Psoas muscle (tissue), 8 donors: ENCODE measurements at regions of chr9 and their contacts with region 1.

Region 1: GRCh38 chr9:131349881-131350563 is 43.9 kb upstream of the PRRC2B start:
- DNase-seq: peak; percentile 89 to 94
- ATAC-seq: peak; percentile 85 to 95 (median 86)
- H3K4me3 ChIP-seq: peak overlapping the region; percentile 53
- H3K27ac ChIP-seq: no peak overlapping the region
- H3K4me1 ChIP-seq: peaks cover 17% of the 10 kb centered on the region
- H3K27me3 ChIP-seq: no peaks in the 10 kb centered on the region
- CTCF ChIP-seq: peak; percentile 85

Region 2: DNA sequence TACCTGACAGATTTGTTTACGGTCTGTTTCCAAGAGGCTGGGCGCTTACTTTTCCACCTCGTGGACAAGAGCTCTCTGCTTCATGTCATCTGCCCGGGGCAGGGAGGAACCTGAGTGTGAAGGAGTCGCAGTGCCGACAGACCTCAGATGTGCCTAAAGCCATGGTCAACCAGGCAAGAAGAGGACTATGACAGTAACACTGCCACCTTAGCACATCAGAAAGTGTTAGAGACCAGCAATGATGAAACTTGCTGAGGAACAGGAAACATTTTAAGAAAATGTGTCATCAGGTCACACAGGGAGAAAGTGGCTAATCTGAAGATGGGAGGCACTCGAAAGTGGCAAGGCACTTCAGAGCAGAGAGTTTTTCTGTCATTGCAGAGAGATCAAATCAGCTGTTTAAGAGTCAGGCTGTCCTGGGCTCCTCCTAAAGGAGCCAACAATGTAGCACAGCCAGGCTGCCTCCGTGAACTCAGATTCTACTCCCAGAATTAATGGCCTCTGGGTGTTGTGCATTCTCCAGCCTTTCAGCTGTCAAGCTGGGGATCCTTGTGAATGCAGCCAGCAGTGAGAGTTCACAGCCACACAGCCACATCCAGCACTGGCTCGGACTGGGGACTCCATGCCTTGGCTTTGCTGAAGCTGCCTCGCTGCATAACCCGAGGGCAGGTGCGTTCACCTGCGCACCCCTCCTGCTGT is 295.2 kb after region 1 on chr9:
- intact Hi-C with region 1: no loop called
- DNase-seq: no peak
- ATAC-seq: peak; percentile 59 to 74 (median 66)
- H3K4me3 ChIP-seq: no peak overlapping the region
- H3K27ac ChIP-seq: peak overlapping the region; percentile 74
- H3K4me1 ChIP-seq: peaks cover 44% of the 10 kb centered on the region
- H3K27me3 ChIP-seq: no peaks in the 10 kb centered on the region
- CTCF ChIP-seq: no peak

Region 3: DNA sequence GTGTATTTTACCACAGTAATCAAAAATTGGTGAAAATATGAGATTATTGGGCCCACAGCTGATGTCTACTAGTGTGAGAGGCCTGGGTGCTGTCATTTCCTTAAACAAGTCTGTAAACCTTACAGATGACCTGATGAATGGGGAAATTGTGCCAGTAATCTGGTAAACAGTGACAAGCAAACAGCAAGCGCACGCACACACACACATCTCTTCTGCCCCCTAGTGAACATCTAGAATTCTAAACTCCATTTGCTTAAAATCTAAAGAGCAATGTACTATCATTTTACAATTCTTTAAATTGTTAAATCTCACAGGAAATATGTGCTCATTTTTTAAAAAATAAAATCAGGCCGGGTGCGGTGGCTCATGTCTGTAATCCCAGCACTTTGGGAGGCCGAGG is 397.3 kb after region 1 on chr9:
- intact Hi-C with region 1: loop called (anchors 5 to 10 kb)
- DNase-seq: no peak
- ATAC-seq: peak; percentile 61 to 85 (median 84)
- H3K4me3 ChIP-seq: no peak overlapping the region
- H3K27ac ChIP-seq: no peak overlapping the region
- H3K4me1 ChIP-seq: no peaks in the 10 kb centered on the region
- H3K27me3 ChIP-seq: no peaks in the 10 kb centered on the region
- CTCF ChIP-seq: peak; percentile 67